ENCODE measurements at regions of chr1 and their contacts with region 1.

Region 1: DNA sequence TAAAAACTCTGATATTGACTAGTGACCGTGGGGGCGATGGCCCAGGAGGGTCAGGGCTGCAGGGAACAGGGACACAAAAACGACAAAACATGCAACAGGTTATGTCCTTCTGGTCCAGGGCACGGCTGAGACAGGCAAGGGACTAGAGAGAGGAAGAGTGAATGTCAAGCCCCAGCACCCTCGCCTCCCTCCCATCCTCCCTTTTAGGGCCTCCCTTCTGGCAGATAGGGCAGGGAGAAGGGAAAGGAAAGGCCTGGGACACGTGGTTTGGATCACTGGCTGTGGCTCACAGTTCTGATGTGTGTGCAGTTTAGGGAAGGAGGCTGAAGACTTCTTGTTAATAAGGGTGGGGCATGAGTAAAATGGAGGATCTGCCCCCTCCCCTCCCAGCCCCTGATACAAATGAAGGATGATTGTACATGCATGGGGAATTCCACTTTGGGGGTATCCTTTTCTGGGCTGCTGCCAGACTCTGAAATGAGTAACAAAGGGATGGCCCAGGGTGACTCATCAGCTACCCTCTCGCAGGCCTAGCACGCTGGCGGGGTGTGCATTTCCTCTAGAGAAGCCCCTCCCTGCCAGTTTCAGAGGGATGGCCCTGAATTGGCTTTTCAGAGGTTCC is 14.2 kb downstream of the CAPN2 start:
- DNase-seq: peak; percentile 97
- ATAC-seq: peak; percentile 97
- H3K4me3 Mint-ChIP-seq: peak overlapping the region; percentile 34
- H3K27ac Mint-ChIP-seq: peak overlapping the region; percentile 93
- H3K4me1 Mint-ChIP-seq: peaks cover 60% of the 10 kb centered on the region
- H3K27me3 Mint-ChIP-seq: no peaks in the 10 kb centered on the region
- CTCF ChIP-seq: no peak

Region 2: DNA sequence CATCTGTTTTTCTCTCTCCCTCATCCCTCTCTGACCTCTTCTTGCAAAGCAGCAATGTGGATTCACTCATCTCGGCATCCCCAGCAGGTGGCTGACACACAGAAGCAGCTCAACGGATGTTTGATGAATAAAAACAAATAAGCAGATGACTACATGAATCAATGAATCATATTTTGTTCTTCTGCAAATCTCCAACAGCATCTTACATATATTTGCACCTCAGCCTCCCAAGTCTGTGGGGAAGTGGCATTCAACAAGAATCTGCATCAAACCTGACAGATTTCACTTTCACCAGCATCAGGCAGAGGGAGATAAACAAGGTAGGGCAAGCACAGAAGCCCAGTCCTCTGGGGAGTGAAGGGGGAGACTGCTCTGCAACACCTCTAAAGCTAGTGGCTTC is 95.0 kb before region 1 on chr1:
- CTCF ChIA-PET with region 1: no interaction called
- POLR2A ChIA-PET with region 1: no interaction called
- intact Hi-C with region 1: no loop called
- DNase-seq: no peak
- ATAC-seq: no peak
- H3K4me3 Mint-ChIP-seq: no peak overlapping the region
- H3K27ac Mint-ChIP-seq: no peak overlapping the region
- H3K4me1 Mint-ChIP-seq: no peaks in the 10 kb centered on the region
- H3K27me3 Mint-ChIP-seq: peaks cover 6% of the 10 kb centered on the region
- CTCF ChIP-seq: no peak

Region 3: GRCh38 chr1:223645903-223646302 is 80.6 kb before region 1 on chr1:
- CTCF ChIA-PET with region 1: no interaction called
- POLR2A ChIA-PET with region 1: no interaction called
- intact Hi-C with region 1: no loop called
- DNase-seq: no peak
- ATAC-seq: no peak
- H3K4me3 Mint-ChIP-seq: no peak overlapping the region
- H3K27ac Mint-ChIP-seq: no peak overlapping the region
- H3K4me1 Mint-ChIP-seq: no peaks in the 10 kb centered on the region
- H3K27me3 Mint-ChIP-seq: peaks cover 17% of the 10 kb centered on the region
- CTCF ChIP-seq: no peak

Region 4: GRCh38 chr1:223683586-223684487 is 42.7 kb before region 1 on chr1:
- CTCF ChIA-PET with region 1: no interaction called
- POLR2A ChIA-PET with region 1: no interaction called
- intact Hi-C with region 1: no loop called
- DNase-seq: peak; percentile 81
- ATAC-seq: peak; percentile 77
- H3K4me3 Mint-ChIP-seq: no peak overlapping the region
- H3K27ac Mint-ChIP-seq: no peak overlapping the region
- H3K4me1 Mint-ChIP-seq: no peaks in the 10 kb centered on the region
- H3K27me3 Mint-ChIP-seq: peaks cover 3% of the 10 kb centered on the region
- CTCF ChIP-seq: peak; percentile 68

Region 5: DNA sequence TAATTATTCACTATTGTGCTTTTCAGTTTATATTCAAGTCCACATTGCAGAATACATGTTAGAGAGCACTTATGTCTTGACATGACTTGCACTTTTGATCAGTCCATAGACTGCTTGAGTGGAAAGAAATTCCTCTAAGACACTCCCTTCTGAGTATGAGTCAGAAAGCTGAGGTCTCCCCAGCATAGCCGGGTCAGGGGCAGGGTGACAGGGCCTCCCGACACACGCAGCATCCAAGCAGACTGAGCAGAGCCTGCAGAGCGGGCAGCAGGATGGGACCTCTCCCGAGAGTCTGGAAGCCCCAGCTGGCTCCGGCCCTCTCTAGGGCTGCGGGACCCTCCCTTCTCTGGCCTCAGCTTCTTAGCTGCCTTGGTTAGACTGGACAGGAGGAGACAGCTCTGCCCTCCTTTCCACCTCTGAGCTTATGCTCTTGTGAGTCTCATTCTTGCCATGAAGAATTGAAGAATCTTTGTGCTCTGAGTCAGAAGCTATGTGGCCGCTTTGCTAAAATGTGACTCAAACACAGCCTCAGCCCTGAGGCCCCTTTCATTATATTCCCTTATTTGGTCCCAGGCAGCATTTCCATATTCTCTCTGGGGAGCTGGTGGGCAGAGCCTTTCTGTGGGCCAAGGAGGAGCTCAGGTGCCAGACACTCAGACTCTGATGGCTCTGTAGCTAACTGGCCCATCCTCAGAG is 25.4 kb before region 1 on chr1:
- CTCF ChIA-PET with region 1: interaction called, 16 read pairs
- POLR2A ChIA-PET with region 1: no interaction called
- intact Hi-C with region 1: no loop called
- DNase-seq: peak; percentile 52
- ATAC-seq: peak; percentile 54
- H3K4me3 Mint-ChIP-seq: no peak overlapping the region
- H3K27ac Mint-ChIP-seq: peak overlapping the region; percentile 63
- H3K4me1 Mint-ChIP-seq: peaks cover 40% of the 10 kb centered on the region
- H3K27me3 Mint-ChIP-seq: no peaks in the 10 kb centered on the region
- CTCF ChIP-seq: no peak

Region 6: GRCh38 chr1:223776075-223776814 is 49.8 kb after region 1 on chr1:
- CTCF ChIA-PET with region 1: no interaction called
- POLR2A ChIA-PET with region 1: no interaction called
- intact Hi-C with region 1: no loop called
- DNase-seq: peak; percentile 75
- ATAC-seq: peak; percentile 97
- H3K4me3 Mint-ChIP-seq: no peak overlapping the region
- H3K27ac Mint-ChIP-seq: peak overlapping the region; percentile 86
- H3K4me1 Mint-ChIP-seq: peaks cover 40% of the 10 kb centered on the region
- H3K27me3 Mint-ChIP-seq: no peaks in the 10 kb centered on the region
- CTCF ChIP-seq: no peak

Measured in activated CD8-positive, alpha-beta T cell treated with anti-CD3 and anti-CD28 coated beads for 36 hours (primary cell).